ENCODE measurements at regions of chr1 and their contacts with region 1.

Region 1: GRCh38 chr1:67489643-67490042 is 59.4 kb upstream of the SERBP1 start:
- DNase-seq: no peak
- ATAC-seq: peak; percentile 69 to 90 (median 70)
- H3K4me3 ChIP-seq: no peak overlapping the region
- H3K27ac ChIP-seq: no peak overlapping the region
- H3K4me1 ChIP-seq: no peaks in the 10 kb centered on the region
- H3K27me3 ChIP-seq: no peaks in the 10 kb centered on the region
- CTCF ChIP-seq: peak in 3 of 4 donors; percentile 18 to 37 (median 32)
- POLR2A ChIP-seq: no peak

Region 2: GRCh38 chr1:67227196-67227595 is 262.4 kb before region 1 on chr1:
- intact Hi-C with region 1: loop called in 1 of 2 experiments (anchors 10 kb)
- DNase-seq: no peak
- ATAC-seq: no peak
- H3K4me3 ChIP-seq: no peak overlapping the region
- H3K27ac ChIP-seq: no peak overlapping the region
- H3K4me1 ChIP-seq: no peaks in the 10 kb centered on the region
- H3K27me3 ChIP-seq: no peaks in the 10 kb centered on the region
- CTCF ChIP-seq: no peak
- POLR2A ChIP-seq: no peak

Region 3: GRCh38 chr1:67256291-67257172 is 233.1 kb before region 1 on chr1:
- intact Hi-C with region 1: no loop called
- DNase-seq: no peak
- ATAC-seq: no peak
- H3K4me3 ChIP-seq: no peak overlapping the region
- H3K27ac ChIP-seq: no peak overlapping the region
- H3K4me1 ChIP-seq: no peaks in the 10 kb centered on the region
- H3K27me3 ChIP-seq: no peaks in the 10 kb centered on the region
- CTCF ChIP-seq: no peak
- POLR2A ChIP-seq: no peak

Region 4: DNA sequence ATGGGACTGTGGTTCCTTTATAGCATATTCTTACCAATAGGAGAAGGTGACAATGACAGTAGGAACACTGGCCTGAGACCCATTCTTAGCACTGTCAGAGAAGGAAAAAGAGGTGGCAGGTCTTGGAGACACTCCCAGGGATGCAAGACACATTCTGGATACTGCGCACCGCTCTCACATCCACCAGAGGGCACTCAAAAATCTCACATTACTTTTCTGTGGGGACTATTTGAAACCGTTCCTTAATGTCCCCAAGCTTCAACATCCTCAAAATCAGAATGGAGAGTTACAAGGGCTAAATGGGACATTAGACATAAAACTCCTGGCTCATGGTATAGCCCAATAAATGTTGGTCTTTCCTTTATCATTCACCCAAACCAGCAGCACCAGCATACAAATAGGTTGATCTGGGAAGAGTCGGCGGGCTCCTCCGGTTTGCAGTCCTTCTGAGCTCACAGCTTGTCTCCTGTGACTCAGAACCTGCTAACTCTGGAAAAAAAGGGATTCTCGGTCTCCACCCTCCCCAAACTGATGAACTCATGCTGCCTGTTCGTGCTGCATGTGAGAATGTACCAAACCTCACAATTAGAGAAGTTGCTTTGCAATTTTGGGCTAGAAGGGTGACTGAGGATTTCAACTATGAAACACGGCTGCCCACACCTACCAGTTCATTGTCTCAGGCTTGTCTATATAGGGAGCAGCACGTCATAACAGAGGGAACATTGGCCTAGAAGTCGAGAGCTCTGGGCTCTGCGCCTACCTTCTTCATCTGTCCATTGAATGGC is 141.8 kb before region 1 on chr1:
- intact Hi-C with region 1: loop called in 1 of 2 experiments (anchors 10 kb)
- DNase-seq: peak in 1 of 3 donors; percentile 49
- ATAC-seq: peak; percentile 82 to 90 (median 88)
- H3K4me3 ChIP-seq: no peak overlapping the region
- H3K27ac ChIP-seq: no peak overlapping the region
- H3K4me1 ChIP-seq: no peaks in the 10 kb centered on the region
- H3K27me3 ChIP-seq: no peaks in the 10 kb centered on the region
- CTCF ChIP-seq: peak; percentile 67 to 74 (median 74)
- POLR2A ChIP-seq: no peak

Region 5: DNA sequence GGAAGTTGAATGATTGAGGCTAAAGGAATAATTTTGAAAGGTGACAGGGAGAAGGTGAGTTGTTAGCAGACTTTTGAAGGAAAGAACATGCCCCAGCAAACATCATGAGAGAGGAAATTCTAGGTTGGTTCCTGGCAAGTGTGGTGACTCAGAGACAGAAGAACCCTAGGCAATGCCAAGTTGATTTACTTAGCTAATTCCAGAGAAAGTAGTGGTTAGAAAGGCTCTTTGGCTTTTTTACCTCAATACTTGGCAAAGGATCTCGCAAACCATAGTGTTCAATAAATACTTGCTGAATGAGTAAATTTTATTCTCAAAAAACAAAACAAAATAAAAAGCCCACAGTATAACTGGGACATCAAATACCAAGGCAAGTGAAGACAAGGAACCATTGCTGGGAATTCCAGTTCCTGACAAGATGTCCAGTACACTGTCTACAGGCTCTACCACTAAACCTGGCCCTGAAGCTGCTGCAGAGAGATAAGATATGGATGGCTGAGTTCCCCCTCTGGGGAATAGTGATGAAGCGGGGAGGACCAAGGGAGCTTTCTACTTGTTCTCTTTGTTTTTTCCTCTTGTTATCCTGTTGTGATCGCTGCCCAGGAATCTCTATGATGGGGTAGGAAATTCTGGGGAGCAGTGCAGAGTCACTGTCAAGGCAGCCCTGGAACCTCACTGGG is 133.8 kb before region 1 on chr1:
- intact Hi-C with region 1: loop called in 1 of 2 experiments (anchors 5 kb)
- DNase-seq: no peak
- ATAC-seq: no peak
- H3K4me3 ChIP-seq: no peak overlapping the region
- H3K27ac ChIP-seq: no peak overlapping the region
- H3K4me1 ChIP-seq: no peaks in the 10 kb centered on the region
- H3K27me3 ChIP-seq: no peaks in the 10 kb centered on the region
- CTCF ChIP-seq: no peak
- POLR2A ChIP-seq: no peak

Region 6: GRCh38 chr1:67646145-67647035 is 156.7 kb after region 1 on chr1:
- intact Hi-C with region 1: no loop called
- DNase-seq: peak; percentile 23 to 74 (median 65)
- ATAC-seq: peak; percentile 47 to 67 (median 63)
- H3K4me3 ChIP-seq: peak overlapping the region in 1 of 3 donors; percentile 2
- H3K27ac ChIP-seq: peak overlapping the region; percentile 44 to 85 (median 69)
- H3K4me1 ChIP-seq: peaks cover 0 to 33% (median 14%) of the 10 kb centered on the region in 4 donors
- H3K27me3 ChIP-seq: no peaks in the 10 kb centered on the region
- CTCF ChIP-seq: no peak
- POLR2A ChIP-seq: no peak